CD4-positive, alpha-beta T cell (primary cell): ENCODE measurements at regions of chr10 and their contacts with region 1.

Region 1: DNA sequence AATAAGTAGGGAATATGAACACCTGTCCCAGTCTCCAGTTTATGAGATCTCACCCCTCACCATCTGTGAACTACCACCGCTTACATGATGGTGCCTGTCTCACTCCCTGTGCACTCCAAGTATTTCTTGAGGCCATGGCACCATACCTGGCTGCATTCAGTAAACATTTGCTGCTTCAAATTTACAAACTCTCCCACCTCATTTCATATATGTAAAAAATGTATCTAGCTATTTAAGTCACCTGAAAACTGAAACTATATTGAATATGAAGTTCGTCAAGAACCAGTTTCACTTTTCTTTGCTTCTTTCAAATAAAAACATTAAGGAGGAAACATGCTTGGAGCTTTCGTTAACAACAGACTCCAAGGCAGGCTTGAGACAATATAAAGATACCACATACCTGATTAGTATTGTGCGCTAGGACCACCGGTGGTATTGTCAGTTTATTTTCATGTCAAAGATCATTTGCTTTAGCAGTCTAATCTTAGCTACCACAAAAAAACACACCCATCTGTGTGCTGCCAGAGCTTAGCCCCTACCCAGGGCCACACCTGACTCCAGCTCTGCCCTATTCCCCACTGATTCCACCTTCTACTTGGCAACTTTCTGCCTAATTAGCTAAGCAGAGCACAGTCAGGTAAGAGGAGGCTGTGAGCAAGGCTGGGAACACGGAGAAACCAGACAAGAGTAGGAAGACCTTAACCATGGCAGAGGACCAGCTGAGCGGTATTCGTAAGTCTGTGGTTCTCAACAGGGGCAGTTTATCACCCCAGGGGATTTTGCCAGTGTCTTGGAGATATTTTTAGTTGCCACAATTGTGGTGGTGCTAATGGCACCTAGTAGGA is 92.0 kb downstream of the ZFAND4 start:
- DNase-seq: peak in 4 of 14 experiments; percentile 11 to 65 (median 58)
- ATAC-seq: peak; percentile 58
- H3K4me3 ChIP-seq: peak overlapping the region; percentile 56
- H3K4me3 Mint-ChIP-seq: peak overlapping the region; percentile 90
- H3K27ac ChIP-seq: peak overlapping the region; percentile 61 to 86
- H3K27ac Mint-ChIP-seq: peak overlapping the region; percentile 84
- H3K4me1 ChIP-seq: peaks cover 9% of the 10 kb centered on the region
- H3K4me1 Mint-ChIP-seq: peaks cover 43% of the 10 kb centered on the region
- H3K27me3 ChIP-seq: no peaks in the 10 kb centered on the region
- H3K27me3 Mint-ChIP-seq: no peaks in the 10 kb centered on the region
- CTCF ChIP-seq: no peak

Region 2: GRCh38 chr10:45470098-45471012 is 110.2 kb before region 1 on chr10:
- CTCF ChIA-PET with region 1: no interaction called
- POLR2A ChIA-PET with region 1: no interaction called
- intact Hi-C with region 1: loop called in 1 of 2 experiments (anchors 10 kb)
- DNase-seq: peak; percentile 31 to 82 (median 54)
- ATAC-seq: peak; percentile 95
- H3K4me3 ChIP-seq: no peak overlapping the region
- H3K4me3 Mint-ChIP-seq: peak overlapping the region; percentile 1
- H3K27ac ChIP-seq: peak overlapping the region; percentile 38 to 55
- H3K27ac Mint-ChIP-seq: peak overlapping the region; percentile 79
- H3K4me1 ChIP-seq: peaks cover 13% of the 10 kb centered on the region
- H3K4me1 Mint-ChIP-seq: peaks cover 43% of the 10 kb centered on the region
- H3K27me3 ChIP-seq: no peaks in the 10 kb centered on the region
- H3K27me3 Mint-ChIP-seq: no peaks in the 10 kb centered on the region
- CTCF ChIP-seq: no peak

Region 3: DNA sequence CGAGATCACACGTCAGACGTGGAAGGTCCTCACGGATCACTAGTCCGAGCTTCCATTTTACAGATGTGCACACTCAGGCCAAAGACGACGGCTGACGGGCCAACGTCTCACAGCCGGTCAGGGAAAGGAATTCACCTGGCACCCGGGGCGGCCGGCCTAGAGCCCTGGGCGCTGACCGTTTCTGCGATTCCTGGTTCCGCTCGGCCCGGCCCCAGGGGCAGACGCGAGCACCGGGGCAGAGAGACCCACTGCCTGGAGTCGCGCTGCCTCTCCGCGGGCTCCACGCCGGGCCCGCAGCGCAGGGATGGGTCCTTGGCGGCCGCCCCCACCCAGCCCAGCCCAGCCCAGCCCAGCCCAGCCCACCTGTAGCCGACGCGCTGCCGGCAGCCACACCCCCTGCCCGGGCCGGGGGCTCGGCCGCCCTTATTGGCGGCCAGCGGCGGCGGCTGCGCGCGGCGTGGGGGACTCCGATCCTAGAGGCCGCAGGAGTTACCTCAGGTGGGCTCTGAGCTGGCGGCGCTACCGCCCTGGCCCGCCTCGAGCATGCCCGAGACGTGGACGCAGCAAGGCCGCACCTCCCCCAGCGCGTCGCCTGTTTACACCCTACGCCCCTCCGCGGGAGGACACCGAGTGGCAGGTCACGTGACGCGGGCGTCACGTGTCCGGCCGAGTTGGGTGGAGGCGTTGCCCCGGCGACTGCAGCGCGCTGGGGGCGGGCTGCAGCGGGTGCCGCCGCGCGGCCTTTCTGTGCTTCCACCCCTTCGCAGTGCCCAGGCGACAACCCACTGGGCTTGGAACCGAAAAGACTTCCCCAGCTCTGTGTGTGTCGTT is 13.9 kb after region 1 on chr10:
- CTCF ChIA-PET with region 1: no interaction called
- POLR2A ChIA-PET with region 1: interaction called, 48 read pairs
- intact Hi-C with region 1: loop called in 1 of 2 experiments (anchors 2 kb)
- DNase-seq: peak; percentile 75 to 95 (median 87)
- ATAC-seq: peak; percentile 88
- H3K4me3 ChIP-seq: peak overlapping the region; percentile 94
- H3K4me3 Mint-ChIP-seq: peak overlapping the region; percentile 97
- H3K27ac ChIP-seq: peak overlapping the region in 1 of 2 donors; percentile 40
- H3K27ac Mint-ChIP-seq: peak overlapping the region; percentile 87
- H3K4me1 ChIP-seq: peaks cover 12% of the 10 kb centered on the region
- H3K4me1 Mint-ChIP-seq: peaks cover 46% of the 10 kb centered on the region
- H3K27me3 ChIP-seq: no peaks in the 10 kb centered on the region
- H3K27me3 Mint-ChIP-seq: peaks cover 4% of the 10 kb centered on the region
- CTCF ChIP-seq: no peak